ENCODE measurements at regions of chr16 and their contacts with region 1.

Region 1: DNA sequence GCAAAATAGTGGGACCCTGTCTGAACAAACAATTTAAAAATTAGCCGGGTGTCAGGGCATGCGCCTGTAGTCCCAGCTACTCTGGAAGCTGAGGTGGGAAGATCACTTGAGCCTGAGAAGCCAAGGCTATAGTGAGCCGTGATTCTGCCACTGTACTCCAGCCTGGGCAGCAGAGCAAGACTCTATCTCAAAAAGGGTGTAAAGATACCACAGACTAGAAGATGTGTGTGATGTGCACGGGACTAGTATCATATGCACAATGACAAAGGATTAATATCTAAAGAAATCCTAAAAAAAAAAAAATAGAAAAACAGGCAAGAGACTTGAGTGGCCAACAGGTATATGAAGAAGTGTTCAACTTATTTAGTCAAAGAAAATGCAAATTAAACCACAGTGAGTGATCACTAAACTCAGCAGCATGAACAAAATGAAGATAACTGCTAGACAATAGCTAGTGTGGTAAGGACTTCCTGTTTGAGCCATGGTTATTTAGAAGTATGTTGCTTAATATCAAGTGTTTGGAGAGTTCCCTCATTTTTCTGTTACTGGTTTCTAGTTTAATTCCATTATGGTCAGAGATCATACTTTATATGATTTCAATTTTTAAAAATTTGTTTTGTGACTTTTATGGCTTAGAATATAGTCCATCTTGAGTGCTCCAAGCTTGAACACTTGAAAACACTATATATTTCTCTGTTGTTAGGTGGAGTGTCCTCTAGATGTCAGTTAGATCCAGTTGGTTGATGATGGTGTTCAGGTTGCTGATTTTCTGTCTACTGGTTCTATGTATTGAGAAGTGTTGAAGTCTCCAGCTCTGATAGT is 14.7 kb upstream of the SLX4 start:
- DNase-seq: peak; percentile 79
- H3K4me3 ChIP-seq: peak overlapping the region; percentile 36
- H3K27ac ChIP-seq: peak overlapping the region; percentile 94
- H3K4me1 ChIP-seq: peaks cover 79% of the 10 kb centered on the region
- CTCF ChIP-seq: peak; percentile 77

Region 2: DNA sequence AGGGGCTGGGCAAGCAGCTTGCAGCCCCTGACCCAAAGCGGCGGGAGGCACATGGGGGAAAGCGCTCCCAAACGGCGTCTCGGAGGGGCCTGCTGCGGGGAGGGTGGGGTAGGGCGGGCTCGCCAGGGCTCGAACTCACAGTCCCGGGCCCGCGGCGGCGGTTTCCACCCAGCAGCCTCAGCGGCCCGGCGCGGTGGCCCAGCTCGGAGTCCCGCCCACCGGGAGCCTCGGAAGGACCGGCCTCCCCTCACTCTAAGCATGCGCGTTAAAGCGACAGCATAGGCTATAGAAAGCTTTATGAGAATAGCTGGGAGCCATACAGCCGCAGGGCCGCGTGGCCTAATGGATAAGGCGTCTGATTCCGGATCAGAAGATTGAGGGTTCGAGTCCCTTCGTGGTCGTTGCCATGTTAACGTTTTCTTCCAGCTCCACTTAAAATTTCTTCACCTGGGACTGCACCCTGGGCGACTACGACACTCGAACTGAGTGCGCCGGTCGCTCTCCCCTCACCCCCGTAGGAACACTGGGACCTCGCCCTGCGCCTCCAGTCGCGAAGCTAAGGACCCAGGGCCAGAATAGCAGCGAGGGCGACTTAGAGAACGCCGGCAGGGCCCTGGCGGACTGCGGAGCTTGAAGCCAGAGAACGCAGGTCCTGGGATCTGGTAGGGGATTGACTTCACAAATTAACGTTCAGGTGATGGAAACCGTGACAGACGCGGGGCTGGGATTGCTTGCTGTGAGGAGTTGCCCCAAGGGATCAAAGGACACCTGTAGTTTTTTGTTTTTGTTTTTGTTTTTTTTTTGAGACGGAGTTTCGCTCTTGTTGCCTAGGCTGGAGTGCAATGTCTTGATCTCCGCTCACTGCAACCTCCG is 475.5 kb before region 1 on chr16:
- CTCF ChIA-PET with region 1: no interaction called
- POLR2A ChIA-PET with region 1: no interaction called
- intact Hi-C with region 1: loop called (anchors 10 kb)
- DNase-seq: peak; percentile 97
- H3K4me3 ChIP-seq: peak overlapping the region; percentile 79
- H3K27ac ChIP-seq: peak overlapping the region; percentile 66
- H3K4me1 ChIP-seq: peaks cover 17% of the 10 kb centered on the region
- CTCF ChIP-seq: no peak

Region 3: DNA sequence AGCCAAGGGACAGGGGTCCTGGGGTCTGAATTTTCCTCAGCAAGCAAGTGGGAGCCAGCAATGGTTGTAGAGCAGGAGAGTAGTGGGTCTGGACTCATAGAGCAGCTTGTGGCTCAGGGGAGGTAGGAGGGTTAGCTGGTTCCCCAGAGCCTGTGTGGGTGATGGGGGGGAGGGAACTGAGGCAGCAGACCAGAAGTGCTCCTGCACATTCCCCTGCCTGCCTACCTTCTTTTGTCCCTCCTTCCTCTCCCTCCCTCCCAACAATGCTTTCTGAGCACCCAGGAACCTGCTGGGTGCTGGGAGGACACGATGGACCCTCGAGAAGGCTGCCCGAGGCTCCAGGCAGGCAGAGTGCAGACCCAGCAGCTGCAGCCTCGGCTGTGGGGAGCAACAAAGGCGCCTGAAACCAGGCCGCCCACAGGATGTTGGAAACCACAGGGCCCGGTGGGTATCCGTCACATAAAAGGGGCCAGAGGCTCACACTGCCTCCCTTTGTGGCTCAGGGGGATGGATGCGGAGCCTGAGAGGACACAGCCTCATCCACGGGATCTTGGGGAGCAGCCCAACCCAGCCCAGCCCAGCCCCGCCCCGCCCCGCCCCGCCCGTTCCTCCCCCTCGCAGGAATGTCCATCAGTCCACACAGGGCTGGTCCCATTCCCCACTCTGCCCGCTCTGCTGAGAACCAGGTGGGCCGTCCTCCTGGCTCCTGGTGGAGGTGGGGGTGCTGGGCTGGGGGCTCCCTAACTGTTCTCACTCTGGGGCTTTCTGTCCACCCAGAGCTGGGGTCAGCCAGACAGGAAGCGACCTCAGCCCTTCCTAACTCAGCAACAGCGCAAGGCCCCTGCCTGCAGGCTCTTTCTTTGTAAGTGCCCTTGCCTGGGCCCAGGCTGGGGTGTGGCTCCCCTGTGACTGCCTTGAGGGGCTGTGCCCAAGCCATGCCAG is 47.2 kb before region 1 on chr16:
- CTCF ChIA-PET with region 1: interaction called, 5 read pairs
- POLR2A ChIA-PET with region 1: interaction called, 9 read pairs
- intact Hi-C with region 1: loop called (anchors 2 kb)
- DNase-seq: peak; percentile 93
- H3K4me3 ChIP-seq: peak overlapping the region; percentile 71
- H3K27ac ChIP-seq: peak overlapping the region; percentile 94
- H3K4me1 ChIP-seq: peaks cover 62% of the 10 kb centered on the region
- CTCF ChIP-seq: no peak

Region 4: GRCh38 chr16:3587547-3588110 is 38.5 kb before region 1 on chr16:
- CTCF ChIA-PET with region 1: no interaction called
- POLR2A ChIA-PET with region 1: interaction called, 4 read pairs
- intact Hi-C with region 1: loop called (anchors 1 kb)
- DNase-seq: peak; percentile 94
- H3K4me3 ChIP-seq: peak overlapping the region; percentile 46
- H3K27ac ChIP-seq: peak overlapping the region; percentile 95
- H3K4me1 ChIP-seq: peaks cover 40% of the 10 kb centered on the region
- CTCF ChIP-seq: no peak

Region 5: DNA sequence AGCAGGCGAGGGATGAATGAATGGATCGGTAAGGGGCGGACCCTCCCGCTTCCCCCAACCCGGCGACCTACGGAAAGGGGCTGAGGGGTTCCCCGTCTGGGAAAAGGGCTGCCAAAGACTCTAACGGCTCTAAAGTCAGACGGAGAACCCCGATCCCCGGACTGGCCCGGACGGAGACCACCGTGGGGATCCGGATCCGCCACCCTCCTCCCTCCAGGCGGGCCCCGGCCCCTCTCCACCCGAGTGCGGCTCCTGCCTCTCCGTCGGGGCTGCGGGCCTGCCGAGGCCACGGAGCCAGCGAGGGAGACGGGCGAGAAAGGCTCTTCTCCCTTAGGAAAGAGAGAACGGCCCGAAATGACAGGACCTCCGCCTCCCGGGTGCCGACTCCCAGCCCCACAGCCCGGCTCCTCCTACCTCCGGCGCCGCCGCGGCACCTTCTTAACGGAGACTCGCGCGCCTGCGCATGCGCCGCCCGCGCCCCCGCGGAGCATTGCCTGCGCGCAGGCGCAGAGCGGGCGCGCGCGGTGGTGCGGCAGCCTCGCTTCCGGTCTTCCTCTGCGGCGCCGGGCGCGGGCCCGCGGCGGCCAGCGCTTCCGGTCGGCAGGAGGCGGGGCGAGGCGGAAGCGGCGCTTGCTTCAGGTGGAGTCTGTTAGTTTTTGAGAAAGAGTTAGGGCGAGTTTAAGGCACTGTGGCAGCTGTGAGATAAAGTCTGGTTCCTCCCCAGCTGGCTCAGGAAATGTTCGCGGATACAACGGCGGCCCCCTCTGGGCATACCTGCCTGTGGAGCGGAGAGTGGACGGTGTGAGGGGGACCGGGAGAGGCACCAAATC is 14.8 kb before region 1 on chr16 and contains the start of gene SLX4:
- CTCF ChIA-PET with region 1: no interaction called
- POLR2A ChIA-PET with region 1: interaction called, 11 read pairs
- intact Hi-C with region 1: no loop called
- DNase-seq: peak; percentile 97
- H3K4me3 ChIP-seq: peak within 1 kb of the TSS; percentile 88
- H3K27ac ChIP-seq: peak within 1 kb of the TSS; percentile 90
- H3K4me1 ChIP-seq: peaks cover 67% of the 10 kb centered on the region
- CTCF ChIP-seq: no peak
- total RNA-seq, gene SLX4: 13.2 and 13.7 TPM in 2 replicates

Region 6: DNA sequence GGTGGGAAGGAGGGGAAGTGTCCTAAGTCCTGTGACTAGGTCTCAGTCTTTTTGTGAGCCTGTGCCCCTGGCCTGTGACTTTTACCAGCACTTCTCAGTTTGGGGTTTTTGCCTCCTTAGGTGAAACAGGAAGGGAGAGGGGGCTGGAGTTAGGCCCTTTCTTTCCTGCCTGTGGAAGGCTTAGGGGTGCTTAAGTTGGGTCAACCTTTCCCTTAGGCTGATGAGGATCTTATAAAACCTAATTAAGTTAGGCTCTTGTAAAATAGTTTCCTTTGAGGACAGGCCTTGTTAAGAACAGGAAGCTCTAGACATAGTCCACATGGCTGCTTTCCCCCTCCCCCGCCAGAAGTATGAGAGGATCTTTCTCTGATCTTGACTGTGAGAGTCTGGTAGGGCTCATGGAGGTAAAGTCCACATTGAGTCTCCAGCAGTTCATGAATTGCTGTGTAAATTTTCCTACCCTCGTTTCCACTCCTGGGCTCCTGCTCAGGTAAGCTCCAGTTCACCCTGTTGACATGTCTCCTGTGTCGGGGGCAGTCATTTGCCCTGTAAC is 11.3 kb after region 1 on chr16:
- CTCF ChIA-PET with region 1: no interaction called
- POLR2A ChIA-PET with region 1: interaction called, 13 read pairs
- intact Hi-C with region 1: loop called (anchors 1 kb)
- DNase-seq: peak; percentile 75
- H3K4me3 ChIP-seq: peak overlapping the region; percentile 14
- H3K27ac ChIP-seq: peak overlapping the region; percentile 68
- H3K4me1 ChIP-seq: peaks cover 20% of the 10 kb centered on the region
- CTCF ChIP-seq: no peak

Region 7: GRCh38 chr16:3654249-3654991 is 28.3 kb after region 1 on chr16 and contains the start of gene DNASE1:
- CTCF ChIA-PET with region 1: no interaction called
- POLR2A ChIA-PET with region 1: interaction called, 8 read pairs
- intact Hi-C with region 1: loop called (anchors 2 kb)
- DNase-seq: peak; percentile 86
- H3K4me3 ChIP-seq: no peak within 1 kb of the TSS
- H3K27ac ChIP-seq: peak within 1 kb of the TSS; percentile 51
- H3K4me1 ChIP-seq: peaks cover 12% of the 10 kb centered on the region
- CTCF ChIP-seq: peak; percentile 88
- total RNA-seq, gene DNASE1: 38.3 and 45.5 TPM in 2 replicates

Measured in OCI-LY7 (cell line).